MCF 10A (cell line): ENCODE measurements at regions of chrX and their contacts with region 1.

Region 1: DNA sequence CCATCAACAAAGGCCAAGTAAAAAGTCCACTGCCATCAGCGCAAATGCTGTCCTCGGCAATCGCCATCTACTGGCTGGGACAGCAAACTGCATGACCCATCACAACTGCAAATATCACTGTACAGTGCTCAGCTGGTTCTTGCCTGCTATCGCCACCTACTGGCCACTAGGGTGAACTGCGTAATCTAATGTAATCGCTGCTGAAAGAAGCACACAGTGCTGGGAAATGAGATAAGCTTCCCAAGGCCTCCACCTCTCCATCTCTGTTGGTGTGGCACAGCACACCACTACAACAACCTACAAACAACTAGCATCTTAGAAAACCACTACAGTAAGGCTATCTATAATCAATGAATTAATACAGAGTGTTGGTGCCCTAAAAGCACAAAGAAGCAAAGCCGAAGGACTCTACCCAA is 298.3 kb downstream of the TEX13A start:
- DNase-seq: peak; percentile 76
- H3K4me3 Mint-ChIP-seq: no peak overlapping the region
- H3K27ac Mint-ChIP-seq: no peak overlapping the region
- H3K4me1 Mint-ChIP-seq: no peaks in the 10 kb centered on the region
- H3K27me3 Mint-ChIP-seq: peaks cover 50% of the 10 kb centered on the region
- CTCF ChIP-seq: peak; percentile 97

Region 2: DNA sequence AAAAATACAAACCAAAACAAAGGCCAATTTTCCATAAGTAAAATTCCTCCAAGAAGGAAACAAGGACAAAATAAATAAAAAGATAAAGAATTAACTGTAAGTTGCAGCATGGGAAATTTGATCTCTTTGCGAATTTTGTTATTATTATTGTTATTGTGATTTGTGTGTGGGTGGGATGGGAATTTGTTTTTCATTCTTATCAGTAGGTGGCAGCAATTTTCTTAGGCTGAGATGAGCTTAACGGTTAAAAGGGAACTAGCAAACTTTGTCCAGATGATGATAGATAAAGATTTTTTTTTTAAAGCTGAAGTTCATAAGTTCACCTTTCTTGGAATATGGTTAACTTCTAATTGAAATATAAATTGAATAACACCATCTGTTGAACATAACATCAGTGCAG is 439.5 kb before region 1 on chrX:
- CTCF ChIA-PET with region 1: interaction called, 3 read pairs
- POLR2A ChIA-PET with region 1: no interaction called
- intact Hi-C with region 1: loop called (anchors 10 kb)
- DNase-seq: peak; percentile 13
- H3K4me3 Mint-ChIP-seq: no peak overlapping the region
- H3K27ac Mint-ChIP-seq: no peak overlapping the region
- H3K4me1 Mint-ChIP-seq: no peaks in the 10 kb centered on the region
- H3K27me3 Mint-ChIP-seq: peaks cover 44% of the 10 kb centered on the region
- CTCF ChIP-seq: peak; percentile 17

Region 3: GRCh38 chrX:104565791-104566680 is 356.2 kb before region 1 on chrX and contains the start of gene IL1RAPL2:
- CTCF ChIA-PET with region 1: interaction called, 11 read pairs
- POLR2A ChIA-PET with region 1: no interaction called
- intact Hi-C with region 1: loop called (anchors 1 kb)
- DNase-seq: peak; percentile 57
- H3K4me3 Mint-ChIP-seq: peak within 1 kb of the TSS; percentile 74
- H3K27ac Mint-ChIP-seq: no peak within 1 kb of the TSS
- H3K4me1 Mint-ChIP-seq: no peaks in the 10 kb centered on the region
- H3K27me3 Mint-ChIP-seq: peaks cover 36% of the 10 kb centered on the region
- CTCF ChIP-seq: peak; percentile 57
- total RNA-seq, gene IL1RAPL2: 3.2 and 4.4 TPM in 2 replicates

Region 4: GRCh38 chrX:104668550-104668949 is 253.7 kb before region 1 on chrX:
- CTCF ChIA-PET with region 1: interaction called, 32 read pairs
- POLR2A ChIA-PET with region 1: no interaction called
- intact Hi-C with region 1: loop called (anchors 1 kb)
- DNase-seq: peak; percentile 35
- H3K4me3 Mint-ChIP-seq: no peak overlapping the region
- H3K27ac Mint-ChIP-seq: no peak overlapping the region
- H3K4me1 Mint-ChIP-seq: no peaks in the 10 kb centered on the region
- H3K27me3 Mint-ChIP-seq: peaks cover 45% of the 10 kb centered on the region
- CTCF ChIP-seq: no peak